GM10248 (cell line): ENCODE measurements at regions of chr4 and their contacts with region 1.

Region 1: DNA sequence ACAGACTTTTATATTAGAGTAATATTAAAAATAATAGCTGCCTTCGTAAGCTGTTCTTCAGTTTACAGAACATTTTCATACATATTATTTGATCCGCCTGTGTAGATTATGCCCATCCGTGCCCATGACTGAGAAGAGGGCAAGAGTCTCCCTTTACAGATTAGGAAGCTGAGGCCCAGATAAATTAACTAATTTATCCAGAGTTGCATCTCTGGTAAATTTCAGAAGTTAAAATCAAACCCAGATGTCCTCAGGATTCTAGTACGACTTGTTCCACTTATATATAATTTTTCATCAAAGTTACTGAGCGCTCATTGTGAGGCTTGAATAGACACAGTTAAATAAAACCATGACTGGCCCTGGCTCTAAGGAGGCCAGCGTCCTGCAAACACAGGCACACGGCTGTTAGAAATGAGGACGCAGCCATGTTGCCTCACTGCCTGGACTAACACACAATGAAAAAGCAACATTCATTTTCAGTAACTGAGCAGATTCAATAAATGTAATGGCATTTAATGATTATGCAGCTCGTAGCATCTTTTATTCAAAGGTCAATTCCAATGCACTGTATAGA is 148.0 kb downstream of the TENM3 start:
- DNase-seq: no peak
- CTCF ChIP-seq: no peak

Region 2: GRCh38 chr4:182192511-182193181 is 198.6 kb before region 1 on chr4:
- CTCF ChIA-PET with region 1: no interaction called
- POLR2A ChIA-PET with region 1: no interaction called
- DNase-seq: no peak
- CTCF ChIP-seq: no peak

Region 3: DNA sequence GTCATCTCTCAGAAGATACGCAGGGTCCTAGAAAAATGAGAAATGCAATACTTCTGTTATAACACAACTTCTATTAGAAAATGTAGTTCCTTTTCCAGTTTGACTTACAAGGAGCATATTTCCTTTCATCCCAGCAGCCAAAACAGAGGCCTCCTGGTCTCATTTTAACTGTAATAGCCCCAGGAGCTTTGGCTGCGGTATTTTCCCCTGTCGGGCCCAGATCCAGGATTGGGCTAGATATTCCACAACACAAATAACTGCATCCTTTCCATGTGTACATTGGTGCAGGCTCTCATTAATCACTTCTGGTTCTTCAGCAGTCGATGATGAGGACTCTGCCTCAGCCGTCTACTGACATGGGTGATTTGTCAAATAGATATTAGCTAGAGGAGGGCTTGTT is 18.1 kb after region 1 on chr4:
- CTCF ChIA-PET with region 1: no interaction called
- POLR2A ChIA-PET with region 1: no interaction called
- DNase-seq: no peak
- CTCF ChIP-seq: no peak

Region 4: GRCh38 chr4:183936574-183937345 is 1545.6 kb after region 1 on chr4:
- CTCF ChIA-PET with region 1: no interaction called
- POLR2A ChIA-PET with region 1: interaction called, 11 read pairs
- DNase-seq: no peak
- CTCF ChIP-seq: no peak